ENCODE measurements at regions of chr12 and their contacts with region 1.

Region 1: GRCh38 chr12:54220092-54220557 is 31.3 kb upstream of the SMUG1 start:
- ATAC-seq: peak; percentile 43 to 75 (median 62)
- H3K4me3 ChIP-seq: no peak overlapping the region
- H3K27ac ChIP-seq: no peak overlapping the region
- H3K4me1 ChIP-seq: peaks cover 19 to 26% of the 10 kb centered on the region in 2 donors

Region 2: GRCh38 chr12:53995378-53996239 is 224.5 kb before region 1 on chr12:
- in situ Hi-C with region 1: no loop called
- ATAC-seq: peak in 7 of 8 experiments; percentile 9 to 58 (median 18)
- H3K4me3 ChIP-seq: peak overlapping the region in 2 of 5 donors; percentile 3 to 6
- H3K27ac ChIP-seq: no peak overlapping the region
- H3K4me1 ChIP-seq: peaks cover 10 to 22% of the 10 kb centered on the region in 2 donors

Region 3: DNA sequence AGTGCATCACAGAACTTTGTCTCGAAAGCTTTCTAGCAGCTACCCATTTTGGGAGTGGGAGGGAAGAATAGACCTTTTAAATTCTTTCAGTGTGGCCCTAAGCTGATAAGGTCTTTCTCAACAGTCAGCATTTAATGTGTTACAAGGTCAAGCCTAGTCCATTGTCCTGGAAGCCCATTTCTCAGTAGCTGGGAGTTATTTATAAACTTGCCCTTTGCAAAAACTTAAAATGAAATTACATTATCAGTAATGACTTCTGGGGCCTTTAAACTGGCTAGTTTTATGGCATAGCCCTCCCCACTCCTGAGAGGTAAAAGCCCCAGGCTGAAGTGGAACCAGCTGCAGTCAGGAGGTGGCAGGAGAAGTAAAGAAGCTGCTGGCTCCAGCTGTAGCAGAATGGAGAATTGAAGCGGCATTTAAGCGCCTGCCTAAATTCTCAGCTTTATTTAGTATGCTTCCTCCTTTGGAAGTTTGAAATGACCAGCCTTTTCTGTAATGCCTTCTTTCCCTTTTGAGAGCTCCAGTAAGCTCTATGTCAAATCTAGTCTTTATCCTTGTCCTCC is 117.2 kb after region 1 on chr12:
- in situ Hi-C with region 1: no loop called
- ATAC-seq: peak in 6 of 8 experiments; percentile 46 to 69 (median 52)
- H3K4me3 ChIP-seq: no peak overlapping the region
- H3K27ac ChIP-seq: peak overlapping the region in 1 of 2 donors; percentile 1
- H3K4me1 ChIP-seq: peaks cover 52 to 70% of the 10 kb centered on the region in 2 donors

Region 4: GRCh38 chr12:54368709-54369583 is 148.8 kb after region 1 on chr12:
- in situ Hi-C with region 1: loop called in 5 of 9 experiments (anchors 10 to 25 kb)
- ATAC-seq: peak; percentile 49 to 76 (median 74)
- H3K4me3 ChIP-seq: peak overlapping the region in 1 of 5 donors; percentile 1
- H3K27ac ChIP-seq: no peak overlapping the region
- H3K4me1 ChIP-seq: peaks cover 18 to 30% of the 10 kb centered on the region in 2 donors

Region 5: DNA sequence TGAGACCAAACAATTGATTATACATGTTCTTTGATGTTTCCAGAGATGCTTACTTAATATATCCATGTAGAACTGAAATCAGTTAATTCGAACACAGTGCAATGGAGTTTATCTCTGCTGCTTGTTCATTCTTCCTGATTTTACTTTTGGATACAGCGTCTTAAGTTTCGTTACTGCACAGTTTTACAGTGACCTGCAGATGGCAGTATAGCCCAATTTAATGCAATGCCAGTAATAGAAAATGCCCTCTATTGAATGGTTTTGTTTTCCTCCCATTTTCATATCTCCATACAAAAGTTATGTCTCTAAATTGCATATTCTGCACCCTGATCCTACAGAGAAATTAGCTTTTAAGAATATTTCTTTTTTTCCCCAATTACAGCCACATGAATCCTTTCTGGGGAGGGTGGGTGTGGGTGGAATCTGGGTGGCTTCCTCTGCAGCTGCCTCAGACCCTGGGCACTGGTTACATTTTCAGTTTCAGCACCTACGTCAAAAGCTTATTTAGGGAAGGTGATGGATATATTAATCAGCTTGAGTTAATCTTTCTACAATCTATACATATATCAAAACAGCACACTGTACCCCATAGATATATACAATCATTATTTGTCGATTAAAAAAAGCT is 529.2 kb after region 1 on chr12:
- in situ Hi-C with region 1: no loop called
- ATAC-seq: peak in 4 of 8 experiments; percentile 39 to 77 (median 70)
- H3K4me3 ChIP-seq: no peak overlapping the region
- H3K27ac ChIP-seq: no peak overlapping the region
- H3K4me1 ChIP-seq: no peaks in the 10 kb centered on the region

Measured in motor neuron (in vitro differentiated cells).